ENCODE measurements at regions of chr2 and their contacts with region 1.

Region 1: GRCh38 chr2:204177977-204178540 is 241.5 kb downstream of the ICOS start:
- DNase-seq: peak; percentile 75
- ATAC-seq: peak; percentile 87
- H3K4me3 Mint-ChIP-seq: no peak overlapping the region
- H3K27ac Mint-ChIP-seq: no peak overlapping the region
- H3K4me1 Mint-ChIP-seq: peaks cover 3% of the 10 kb centered on the region
- H3K27me3 Mint-ChIP-seq: peaks cover 30% of the 10 kb centered on the region

Region 2: DNA sequence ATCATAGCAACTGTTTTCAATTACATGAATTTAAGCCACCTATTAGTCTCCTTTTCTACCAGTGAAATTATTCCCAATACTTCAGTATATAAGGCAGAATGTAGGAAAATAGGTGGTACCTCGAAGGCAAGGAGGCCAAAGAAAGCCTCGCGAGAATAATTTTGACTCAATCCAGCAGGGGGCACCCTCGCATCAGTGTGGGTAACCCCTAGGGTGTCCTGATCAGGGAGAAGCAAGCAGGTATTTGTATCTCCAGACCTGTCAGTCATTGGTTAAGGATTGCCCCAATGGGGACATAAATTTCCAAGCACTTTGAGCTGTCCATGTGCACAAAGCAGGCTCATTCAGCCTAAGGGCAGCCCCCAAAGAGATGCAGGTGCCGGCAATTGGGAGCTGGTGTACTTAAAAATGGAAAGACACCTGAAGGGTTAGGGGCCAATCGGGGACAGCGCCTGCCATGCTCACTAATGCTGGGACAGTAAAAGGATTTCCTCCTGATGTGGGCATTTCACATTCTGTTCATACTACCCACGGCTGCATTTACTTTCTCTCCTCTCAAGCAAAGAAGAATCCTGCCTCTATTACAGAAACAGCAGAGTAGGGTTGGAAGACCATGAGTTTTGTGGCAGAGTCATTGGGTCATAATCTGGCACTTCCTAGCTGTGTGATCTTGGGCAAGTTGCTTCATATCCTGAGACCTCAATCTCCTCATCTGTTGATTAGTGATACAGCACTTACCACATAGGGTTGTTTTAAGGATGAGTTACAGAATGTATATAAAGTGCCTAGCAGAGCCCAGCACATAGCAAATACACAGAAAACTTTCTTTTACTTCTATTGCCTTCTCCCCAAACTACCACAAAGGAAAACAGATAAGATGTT is 105.4 kb before region 1 on chr2:
- CTCF ChIA-PET with region 1: interaction called, 10 read pairs
- DNase-seq: peak; percentile 73
- ATAC-seq: peak; percentile 71
- H3K4me3 Mint-ChIP-seq: no peak overlapping the region
- H3K27ac Mint-ChIP-seq: no peak overlapping the region
- H3K4me1 Mint-ChIP-seq: no peaks in the 10 kb centered on the region
- H3K27me3 Mint-ChIP-seq: peaks cover 19% of the 10 kb centered on the region

Region 3: GRCh38 chr2:204108330-204108751 is 69.7 kb before region 1 on chr2:
- CTCF ChIA-PET with region 1: interaction called, 26 read pairs
- DNase-seq: peak; percentile 77
- ATAC-seq: peak; percentile 63
- H3K4me3 Mint-ChIP-seq: peak overlapping the region; percentile 70
- H3K27ac Mint-ChIP-seq: peak overlapping the region; percentile 90
- H3K4me1 Mint-ChIP-seq: peaks cover 70% of the 10 kb centered on the region
- H3K27me3 Mint-ChIP-seq: peaks cover 16% of the 10 kb centered on the region

Region 4: DNA sequence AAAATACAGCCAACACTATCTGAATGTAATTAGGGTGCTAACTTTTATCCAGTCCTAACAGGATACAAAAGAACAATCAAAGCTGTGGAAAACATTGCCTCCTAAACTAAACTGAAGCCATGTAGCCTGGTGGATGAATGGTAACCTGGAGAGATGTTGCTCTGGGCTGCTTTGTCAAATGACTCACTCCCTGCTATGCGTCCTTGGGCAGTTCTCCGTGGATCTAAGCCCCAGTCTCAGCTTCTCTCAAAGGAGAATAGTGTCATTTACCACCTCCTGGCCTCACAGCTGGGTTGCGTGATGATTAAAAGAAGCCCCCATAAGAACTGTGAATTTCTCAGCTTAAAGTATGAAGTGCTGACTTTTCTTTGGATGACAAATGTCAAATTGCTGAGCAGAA is 37.8 kb before region 1 on chr2:
- CTCF ChIA-PET with region 1: interaction called, 36 read pairs
- DNase-seq: no peak
- ATAC-seq: no peak
- H3K4me3 Mint-ChIP-seq: no peak overlapping the region
- H3K27ac Mint-ChIP-seq: no peak overlapping the region
- H3K4me1 Mint-ChIP-seq: peaks cover 3% of the 10 kb centered on the region
- H3K27me3 Mint-ChIP-seq: peaks cover 22% of the 10 kb centered on the region

Region 5: DNA sequence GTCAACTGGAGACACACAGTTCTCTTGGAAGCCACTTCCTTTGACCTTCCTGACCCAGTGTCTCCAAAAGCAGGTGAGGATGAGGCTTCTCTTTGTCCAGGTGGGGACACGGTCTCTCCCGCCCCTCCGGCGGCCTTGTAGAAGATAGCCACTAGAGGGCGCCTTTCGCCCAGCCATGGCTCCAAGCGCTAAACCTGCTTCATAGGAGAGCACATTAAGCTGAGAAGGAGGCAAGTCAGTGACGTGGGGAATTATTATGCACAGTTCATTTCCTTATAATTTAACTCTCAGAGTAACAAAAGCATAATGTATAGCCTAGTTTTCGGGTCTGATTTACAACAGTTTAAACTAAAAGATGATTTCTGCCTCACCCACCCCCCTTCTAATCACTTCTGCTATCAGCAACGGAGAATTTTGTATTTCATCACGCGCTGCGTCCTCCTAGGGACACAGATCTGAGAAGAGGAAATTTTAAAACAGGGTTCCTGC is 32.8 kb before region 1 on chr2:
- CTCF ChIA-PET with region 1: interaction called, 36 read pairs
- DNase-seq: peak; percentile 86
- ATAC-seq: peak; percentile 99
- H3K4me3 Mint-ChIP-seq: peak overlapping the region; percentile 69
- H3K27ac Mint-ChIP-seq: peak overlapping the region; percentile 65
- H3K4me1 Mint-ChIP-seq: peaks cover 13% of the 10 kb centered on the region
- H3K27me3 Mint-ChIP-seq: peaks cover 39% of the 10 kb centered on the region

Region 6: GRCh38 chr2:204159526-204159925 is 18.5 kb before region 1 on chr2:
- CTCF ChIA-PET with region 1: interaction called, 18 read pairs
- DNase-seq: no peak
- ATAC-seq: no peak
- H3K4me3 Mint-ChIP-seq: no peak overlapping the region
- H3K27ac Mint-ChIP-seq: no peak overlapping the region
- H3K4me1 Mint-ChIP-seq: no peaks in the 10 kb centered on the region
- H3K27me3 Mint-ChIP-seq: peaks cover 5% of the 10 kb centered on the region

Region 7: DNA sequence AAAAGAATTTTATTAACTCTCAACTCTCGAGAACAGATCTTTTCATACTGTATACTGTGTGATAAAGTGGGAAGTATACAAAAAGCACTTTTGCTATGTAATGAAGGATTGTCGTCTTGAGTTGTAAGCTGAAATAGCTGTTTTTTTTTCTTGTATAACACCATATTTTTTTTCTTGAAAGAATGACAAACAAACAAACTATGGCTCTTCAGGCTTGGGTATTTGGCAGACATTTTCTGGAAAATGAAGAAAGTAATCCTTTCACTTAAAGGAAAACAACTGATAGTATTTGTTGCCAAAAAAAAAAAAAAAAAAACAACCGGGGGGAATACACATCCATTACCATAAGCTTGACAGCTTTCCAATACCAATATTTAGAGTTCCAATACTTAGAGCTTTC is 11.1 kb before region 1 on chr2:
- CTCF ChIA-PET with region 1: interaction called, 18 read pairs
- DNase-seq: no peak
- ATAC-seq: no peak
- H3K4me3 Mint-ChIP-seq: no peak overlapping the region
- H3K27ac Mint-ChIP-seq: no peak overlapping the region
- H3K4me1 Mint-ChIP-seq: no peaks in the 10 kb centered on the region
- H3K27me3 Mint-ChIP-seq: peaks cover 17% of the 10 kb centered on the region